ENCODE measurements at regions of chr15 and their contacts with region 1.

Region 1: DNA sequence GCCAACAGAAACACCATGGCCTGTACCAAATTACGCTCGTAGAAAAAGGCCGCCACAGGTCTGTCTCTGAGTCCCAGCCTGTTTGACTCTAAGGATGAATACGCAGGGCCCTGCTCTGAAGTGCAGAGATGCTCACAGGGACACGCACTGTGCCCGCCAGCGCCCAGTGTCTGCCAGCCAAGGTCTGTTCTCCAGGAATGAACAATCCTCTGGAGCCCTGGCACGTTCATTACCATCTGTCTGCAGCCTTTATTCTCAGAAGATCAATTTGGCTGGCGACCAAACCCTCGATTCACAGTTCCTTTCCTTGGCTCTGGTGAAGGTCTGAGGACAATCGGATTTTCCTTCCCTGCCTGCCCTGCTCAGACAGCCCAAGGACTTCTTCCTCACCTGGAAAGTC is 66.3 kb downstream of the NIPA2 start:
- H3K4me3 Mint-ChIP-seq: no peak overlapping the region
- H3K27ac Mint-ChIP-seq: no peak overlapping the region
- H3K4me1 Mint-ChIP-seq: no peaks in the 10 kb centered on the region
- H3K27me3 Mint-ChIP-seq: no peaks in the 10 kb centered on the region

Region 2: GRCh38 chr15:22838292-22839042 is 66.3 kb before region 1 on chr15 and contains the start of gene NIPA2:
- intact Hi-C with region 1: no loop called
- H3K4me3 Mint-ChIP-seq: peak within 1 kb of the TSS; percentile 92
- H3K27ac Mint-ChIP-seq: peak within 1 kb of the TSS; percentile 95
- H3K4me1 Mint-ChIP-seq: peaks cover 35% of the 10 kb centered on the region
- H3K27me3 Mint-ChIP-seq: no peaks in the 10 kb centered on the region

Region 3: GRCh38 chr15:22861161-22861560 is 43.6 kb before region 1 on chr15:
- intact Hi-C with region 1: loop called (anchors 5 kb)
- H3K4me3 Mint-ChIP-seq: no peak overlapping the region
- H3K27ac Mint-ChIP-seq: no peak overlapping the region
- H3K4me1 Mint-ChIP-seq: peaks cover 6% of the 10 kb centered on the region
- H3K27me3 Mint-ChIP-seq: no peaks in the 10 kb centered on the region